ENCODE measurements at regions of chr7 and their contacts with region 1.

Region 1: GRCh38 chr7:100407285-100408180 is 21.0 kb downstream of the ZCWPW1 start:
- DNase-seq: peak in 1 of 2 donors; percentile 84
- ATAC-seq: peak; percentile 88 to 99 (median 96)
- H3K4me3 ChIP-seq: no peak overlapping the region
- H3K4me3 Mint-ChIP-seq: no peak overlapping the region
- H3K27ac ChIP-seq: no peak overlapping the region
- H3K27ac Mint-ChIP-seq: no peak overlapping the region
- H3K4me1 ChIP-seq: peaks cover 4% of the 10 kb centered on the region
- H3K4me1 Mint-ChIP-seq: no peaks in the 10 kb centered on the region
- H3K27me3 ChIP-seq: no peaks in the 10 kb centered on the region
- H3K27me3 Mint-ChIP-seq: no peaks in the 10 kb centered on the region
- CTCF ChIP-seq: peak; percentile 87

Region 2: DNA sequence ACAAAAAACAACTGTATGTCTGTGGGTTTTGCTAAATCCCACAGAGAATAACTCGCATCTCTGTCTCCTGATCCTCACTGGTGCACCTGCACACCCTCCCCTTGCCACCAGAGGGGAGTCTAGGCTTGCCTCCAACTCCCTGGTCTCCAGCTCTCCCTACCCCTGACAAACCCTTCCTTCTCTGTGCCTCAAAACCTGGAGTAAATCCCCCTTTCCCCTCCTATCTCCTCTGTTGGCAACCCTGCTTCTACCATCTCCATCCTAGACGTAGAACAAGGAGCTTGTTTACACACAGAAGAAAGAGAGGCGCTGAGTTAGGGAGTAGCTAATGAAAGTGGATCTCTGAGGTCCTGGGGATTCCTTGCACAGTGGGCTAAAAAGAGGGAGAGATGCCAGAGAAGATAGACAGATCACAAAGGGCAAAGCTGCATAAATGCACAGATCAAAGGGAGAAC is 274.8 kb before region 1 on chr7:
- intact Hi-C with region 1: loop called (anchors 2 kb)
- DNase-seq: peak; percentile 44 to 84
- ATAC-seq: peak; percentile 81 to 84 (median 83)
- H3K4me3 ChIP-seq: no peak overlapping the region
- H3K4me3 Mint-ChIP-seq: no peak overlapping the region
- H3K27ac ChIP-seq: no peak overlapping the region
- H3K27ac Mint-ChIP-seq: no peak overlapping the region
- H3K4me1 ChIP-seq: peaks cover 12% of the 10 kb centered on the region
- H3K4me1 Mint-ChIP-seq: peaks cover 9 to 20% of the 10 kb centered on the region in 2 donors
- H3K27me3 ChIP-seq: no peaks in the 10 kb centered on the region
- H3K27me3 Mint-ChIP-seq: peaks cover 0 to 7% of the 10 kb centered on the region in 2 donors
- CTCF ChIP-seq: peak; percentile 79

Region 3: DNA sequence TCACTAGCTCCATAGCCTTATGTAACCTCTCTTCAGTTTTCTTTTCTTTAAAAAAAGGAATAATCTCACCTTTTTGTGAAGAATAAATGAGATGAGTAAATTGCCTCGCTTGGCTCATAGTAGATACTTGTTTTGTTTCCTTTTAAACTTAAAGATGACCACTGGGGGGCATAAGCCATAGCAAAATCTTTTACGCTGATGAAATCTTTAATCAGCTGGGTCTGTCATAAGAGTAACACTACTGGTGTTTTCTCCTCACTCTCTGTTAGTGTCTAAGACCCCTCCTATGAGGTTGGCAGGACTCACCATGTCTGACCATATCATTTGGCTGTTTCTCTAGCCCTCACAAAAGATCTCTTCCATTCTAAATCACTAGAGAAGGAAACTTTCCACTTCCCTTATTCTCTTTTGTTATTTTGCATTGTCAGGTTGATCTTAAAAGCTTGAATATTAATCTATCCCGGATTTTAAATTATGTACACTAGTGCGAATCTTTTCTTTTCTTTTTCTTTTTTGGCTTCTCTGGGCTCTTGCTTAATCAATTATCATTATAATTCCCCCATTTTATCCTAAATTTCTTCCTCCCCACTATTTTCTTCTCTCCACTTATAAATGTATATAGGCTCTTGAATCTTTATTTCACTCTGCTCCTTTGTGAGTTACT is 217.4 kb before region 1 on chr7:
- intact Hi-C with region 1: loop called (anchors 1 kb)
- DNase-seq: peak in 1 of 2 donors; percentile 76
- ATAC-seq: peak; percentile 71 to 91 (median 72)
- H3K4me3 ChIP-seq: no peak overlapping the region
- H3K4me3 Mint-ChIP-seq: no peak overlapping the region
- H3K27ac ChIP-seq: no peak overlapping the region
- H3K27ac Mint-ChIP-seq: peak overlapping the region in 1 of 2 donors; percentile 25
- H3K4me1 ChIP-seq: peaks cover 4% of the 10 kb centered on the region
- H3K4me1 Mint-ChIP-seq: peaks cover 0 to 7% of the 10 kb centered on the region in 2 donors
- H3K27me3 ChIP-seq: no peaks in the 10 kb centered on the region
- H3K27me3 Mint-ChIP-seq: no peaks in the 10 kb centered on the region
- CTCF ChIP-seq: peak; percentile 61

Region 4: GRCh38 chr7:100271716-100272537 is 135.6 kb before region 1 on chr7:
- intact Hi-C with region 1: loop called (anchors 5 kb)
- DNase-seq: peak; percentile 96 to 98
- ATAC-seq: peak; percentile 90 to 95 (median 95)
- H3K4me3 ChIP-seq: peak overlapping the region; percentile 49
- H3K4me3 Mint-ChIP-seq: peak overlapping the region; percentile 84
- H3K27ac ChIP-seq: peak overlapping the region; percentile 50
- H3K27ac Mint-ChIP-seq: peak overlapping the region; percentile 34 to 76
- H3K4me1 ChIP-seq: peaks cover 16% of the 10 kb centered on the region
- H3K4me1 Mint-ChIP-seq: peaks cover 7 to 20% of the 10 kb centered on the region in 2 donors
- H3K27me3 ChIP-seq: no peaks in the 10 kb centered on the region
- H3K27me3 Mint-ChIP-seq: no peaks in the 10 kb centered on the region
- CTCF ChIP-seq: no peak

Region 5: GRCh38 chr7:100516135-100516812 is 108.7 kb after region 1 on chr7:
- intact Hi-C with region 1: no loop called
- DNase-seq: peak; percentile 49 to 80
- ATAC-seq: peak; percentile 85 to 98 (median 90)
- H3K4me3 ChIP-seq: no peak overlapping the region
- H3K4me3 Mint-ChIP-seq: peak overlapping the region; percentile 67
- H3K27ac ChIP-seq: no peak overlapping the region
- H3K27ac Mint-ChIP-seq: peak overlapping the region; percentile 32 to 76
- H3K4me1 ChIP-seq: peaks cover 25% of the 10 kb centered on the region
- H3K4me1 Mint-ChIP-seq: peaks cover 15 to 21% of the 10 kb centered on the region in 2 donors
- H3K27me3 ChIP-seq: no peaks in the 10 kb centered on the region
- H3K27me3 Mint-ChIP-seq: peaks cover 12 to 15% of the 10 kb centered on the region in 2 donors
- CTCF ChIP-seq: no peak